ENCODE measurements at regions of chr10 and their contacts with region 1.

Region 1: DNA sequence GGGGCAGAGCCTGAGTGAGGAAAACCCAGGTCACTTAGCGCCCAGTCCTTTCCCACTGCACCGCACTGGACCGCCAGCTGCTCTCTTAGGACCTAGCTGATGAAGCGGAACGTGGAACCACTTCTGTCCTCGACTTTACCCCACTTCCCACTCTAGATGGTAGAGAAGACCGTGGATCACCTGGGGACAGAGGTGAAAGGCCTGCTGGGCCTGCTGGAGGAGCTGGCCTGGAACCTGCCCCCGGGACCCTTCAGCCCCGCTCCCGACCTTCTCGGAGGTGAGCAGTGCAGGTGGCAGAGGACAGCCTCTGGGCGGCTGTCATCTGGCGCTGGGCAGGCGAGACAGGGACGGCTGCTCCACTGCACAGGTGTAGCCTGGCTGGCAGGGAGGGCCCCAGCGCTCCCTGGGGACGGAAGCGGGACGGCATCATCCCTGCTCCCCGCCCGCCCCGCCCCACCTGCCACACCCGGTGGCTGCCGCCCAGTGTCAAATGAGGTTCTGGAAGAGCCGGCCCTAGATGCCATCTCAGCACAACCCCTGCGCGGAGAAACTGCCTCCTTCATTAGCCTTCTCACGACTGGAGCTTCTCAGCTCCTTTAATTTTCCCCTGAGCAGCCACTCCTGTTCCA is 11.7 kb downstream of the PLAC9 start:
- DNase-seq: no peak
- ATAC-seq: peak; percentile 73
- H3K4me3 ChIP-seq: peak overlapping the region in 1 of 3 experiments; percentile 42; a peak in 1 of 6 replicates
- H3K27ac ChIP-seq: no peak overlapping the region
- H3K4me1 ChIP-seq: peaks cover 30% of the 10 kb centered on the region
- H3K27me3 ChIP-seq: 0 out of 5 replicates have a peak, but pooled peaks cover 0 to 4% of the 10 kb centered on the region in 2 experiments
- CTCF ChIP-seq: no peak; the same call in 1 of the 2 replicates
- EP300 ChIP-seq: no peak
- POLR2A ChIP-seq: no peak
- RAD21 ChIP-seq: no peak; the same call in 1 of the 2 replicates

Region 2: DNA sequence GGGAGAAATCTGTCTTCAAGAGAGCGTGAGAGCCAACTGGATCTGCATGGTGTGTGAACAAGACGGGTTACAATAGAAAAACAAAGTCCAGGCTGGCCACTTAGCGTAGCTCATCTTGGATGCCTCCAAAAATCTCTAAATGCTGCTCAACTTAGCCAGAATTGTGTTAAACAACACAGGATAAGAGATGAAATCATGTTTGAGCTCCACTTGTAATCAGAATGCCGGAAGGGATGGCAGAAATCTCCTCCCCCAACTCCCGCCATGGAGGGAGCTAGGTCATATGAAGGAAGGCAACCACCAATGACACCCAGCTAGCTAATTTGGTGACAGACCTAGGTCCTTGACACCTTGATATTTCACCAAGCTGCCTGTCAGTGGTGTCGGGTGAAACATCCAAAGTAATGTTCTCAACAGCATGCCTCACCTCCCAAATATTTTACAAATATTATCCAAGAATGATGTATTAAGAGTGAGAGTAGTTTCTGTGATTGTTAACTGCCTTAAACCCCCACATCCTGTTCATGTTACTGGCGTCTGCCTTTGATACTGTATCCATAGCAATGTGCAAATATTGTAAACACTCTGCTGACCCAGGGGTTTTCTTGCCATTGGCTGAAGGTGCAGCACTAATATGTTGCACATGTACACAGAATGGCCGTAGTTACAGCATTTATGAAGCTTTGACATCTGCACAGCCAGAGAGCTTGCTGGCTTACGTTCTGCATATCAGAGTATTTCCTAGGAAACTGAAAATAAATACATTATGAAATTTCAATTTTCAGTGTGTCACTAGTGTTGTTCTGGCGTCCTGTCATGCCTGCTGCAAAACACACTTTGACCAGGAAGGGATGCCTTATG is 39.9 kb before region 1 on chr10:
- CTCF ChIA-PET with region 1: no interaction called
- POLR2A ChIA-PET with region 1: no interaction called
- in situ Hi-C with region 1: no loop called
- intact Hi-C with region 1: no loop called
- DNase-seq: peak; percentile 16
- ATAC-seq: peak; percentile 71
- H3K4me3 ChIP-seq: no peak overlapping the region
- H3K27ac ChIP-seq: no peak overlapping the region
- H3K4me1 ChIP-seq: peaks cover 22% of the 10 kb centered on the region; the same call in 1 of the 2 replicates
- H3K27me3 ChIP-seq: no peaks in the 10 kb centered on the region
- CTCF ChIP-seq: no peak
- EP300 ChIP-seq: no peak
- POLR2A ChIP-seq: no peak
- RAD21 ChIP-seq: no peak

Region 3: DNA sequence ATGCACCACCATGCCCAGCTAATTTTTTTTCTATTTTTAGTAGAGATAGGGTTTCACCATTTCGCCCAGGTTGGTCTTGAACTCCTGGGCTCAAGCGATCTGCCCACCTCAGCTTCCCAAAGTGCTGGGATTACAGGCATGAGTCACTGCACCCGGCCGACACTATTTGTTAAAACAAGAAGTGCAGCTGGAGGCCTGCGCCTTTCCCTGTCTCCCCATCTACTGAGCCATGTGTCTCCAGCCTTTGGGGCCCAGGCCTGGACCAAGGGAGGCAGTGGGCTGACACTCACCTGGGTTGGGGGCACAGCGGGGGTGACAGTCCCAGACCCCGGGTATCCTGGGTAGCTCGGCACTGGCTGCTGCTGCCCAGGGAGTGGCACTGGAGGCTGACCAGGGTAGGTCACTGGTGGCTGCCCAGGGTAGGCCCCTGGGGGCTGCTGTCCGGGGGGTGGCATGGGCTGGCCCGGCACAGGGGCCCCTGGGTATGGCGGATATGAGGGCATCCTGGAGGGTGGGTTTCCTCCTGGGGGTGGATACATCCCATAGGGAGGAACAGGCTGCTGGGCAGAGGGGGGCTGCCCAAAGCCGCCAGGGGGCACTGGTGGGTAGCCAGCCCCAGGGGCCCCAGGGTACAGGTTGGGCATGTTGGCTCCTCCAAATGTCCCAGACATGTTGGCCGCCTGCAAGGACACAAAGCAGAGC is 24.6 kb after region 1 on chr10:
- CTCF ChIA-PET with region 1: no interaction called
- POLR2A ChIA-PET with region 1: no interaction called
- in situ Hi-C with region 1: no loop called
- intact Hi-C with region 1: loop called (anchors 2 kb)
- DNase-seq: no peak
- ATAC-seq: peak; percentile 75
- H3K4me3 ChIP-seq: no peak overlapping the region
- H3K27ac ChIP-seq: no peak overlapping the region
- H3K4me1 ChIP-seq: no peaks in the 10 kb centered on the region
- H3K27me3 ChIP-seq: no peaks in the 10 kb centered on the region
- CTCF ChIP-seq: peak; percentile 60
- EP300 ChIP-seq: no peak
- POLR2A ChIP-seq: no peak
- RAD21 ChIP-seq: peak; percentile 76

Region 4: GRCh38 chr10:80205478-80206276 is 61.5 kb after region 1 on chr10 and contains the start of gene ANXA11:
- CTCF ChIA-PET with region 1: no interaction called
- POLR2A ChIA-PET with region 1: interaction called, 3 read pairs
- in situ Hi-C with region 1: no loop called
- intact Hi-C with region 1: loop called (anchors 10 kb)
- DNase-seq: peak; percentile 72
- ATAC-seq: peak; percentile 81
- H3K4me3 ChIP-seq: peak within 1 kb of the TSS; percentile 87 to 93 (median 88)
- H3K27ac ChIP-seq: peak within 1 kb of the TSS; percentile 74
- H3K4me1 ChIP-seq: peaks cover 46% of the 10 kb centered on the region
- H3K27me3 ChIP-seq: no peaks in the 10 kb centered on the region; a peak in 1 of 5 replicates
- CTCF ChIP-seq: peak; percentile 21; the same call in 1 of the 2 replicates
- EP300 ChIP-seq: no peak
- POLR2A ChIP-seq: peak; percentile 91 to 92
- RAD21 ChIP-seq: peak; percentile 34; the same call in 1 of the 2 replicates
- total RNA-seq, gene ANXA11: 51.5 and 63.3 TPM in 2 replicates

Region 5: DNA sequence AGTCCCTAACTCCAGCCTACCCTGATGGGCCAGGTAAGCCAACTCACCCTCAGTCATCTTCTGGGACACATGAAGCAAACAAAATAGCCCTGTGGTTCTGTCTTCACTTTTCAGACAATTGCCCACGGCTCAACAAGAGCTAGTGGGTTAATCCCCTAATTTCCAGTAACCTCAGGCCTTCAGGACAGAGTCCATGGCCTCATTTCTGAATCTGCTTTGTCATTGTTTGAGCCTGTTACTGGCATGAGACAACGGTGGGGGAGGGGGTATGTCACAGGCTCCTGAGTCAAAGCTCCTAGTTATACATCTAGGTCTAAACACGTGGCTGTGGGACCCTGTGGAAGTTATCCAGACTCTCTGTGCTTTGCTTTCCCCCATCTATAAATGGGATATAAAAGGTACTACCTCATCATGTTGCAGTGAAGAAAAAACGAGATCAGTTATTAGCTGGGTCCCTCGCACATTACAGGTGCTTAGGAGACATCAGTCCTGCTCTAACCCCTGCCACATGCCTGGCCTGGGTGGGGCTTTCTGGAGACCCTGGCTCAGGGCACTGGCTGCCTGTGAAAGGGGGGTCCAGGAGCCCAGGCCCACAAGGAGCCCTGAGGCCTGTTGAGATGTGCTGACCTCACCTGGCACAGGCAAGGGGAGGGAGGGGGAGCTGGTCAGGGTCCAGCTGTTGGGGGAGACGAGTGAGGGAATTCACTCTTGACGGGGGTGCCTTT is 128.8 kb after region 1 on chr10:
- CTCF ChIA-PET with region 1: no interaction called
- POLR2A ChIA-PET with region 1: no interaction called
- in situ Hi-C with region 1: no loop called
- intact Hi-C with region 1: no loop called
- DNase-seq: peak; percentile 92
- ATAC-seq: peak; percentile 82
- H3K4me3 ChIP-seq: 0 out of 6 replicates have a peak overlapping the region, but pooled peaks of 1 of the 3 experiments have one; percentile 17
- H3K27ac ChIP-seq: peak overlapping the region; percentile 95
- H3K4me1 ChIP-seq: peaks cover 64% of the 10 kb centered on the region
- H3K27me3 ChIP-seq: no peaks in the 10 kb centered on the region
- CTCF ChIP-seq: no peak
- EP300 ChIP-seq: peak; percentile 83 to 94; a peak in 3 of 4 replicates
- POLR2A ChIP-seq: no peak; a peak in 1 of 4 replicates
- RAD21 ChIP-seq: peak; percentile 41; the same call in 1 of the 2 replicates